ENCODE measurements at regions of chr20 and their contacts with region 1.

Region 1: GRCh38 chr20:42604998-42605956 is 584.4 kb downstream of the PTPRT start:
- DNase-seq: no peak
- ATAC-seq: no peak
- H3K4me3 ChIP-seq: no peak overlapping the region
- H3K27ac ChIP-seq: no peak overlapping the region
- H3K4me1 ChIP-seq: no peaks in the 10 kb centered on the region
- H3K27me3 ChIP-seq: no peaks in the 10 kb centered on the region
- CTCF ChIP-seq: no peak
- POLR2A ChIP-seq: no peak
- RAD21 ChIP-seq: no peak

Region 2: GRCh38 chr20:42587427-42587826 is 17.9 kb before region 1 on chr20:
- CTCF ChIA-PET with region 1: interaction called, 10 read pairs
- POLR2A ChIA-PET with region 1: no interaction called
- dilution Hi-C with region 1: no loop called
- in situ Hi-C with region 1: no loop called
- intact Hi-C with region 1: no loop called
- DNase-seq: no peak
- ATAC-seq: no peak
- H3K4me3 ChIP-seq: no peak overlapping the region
- H3K27ac ChIP-seq: no peak overlapping the region
- H3K4me1 ChIP-seq: no peaks in the 10 kb centered on the region
- H3K27me3 ChIP-seq: no peaks in the 10 kb centered on the region
- CTCF ChIP-seq: no peak
- POLR2A ChIP-seq: no peak
- RAD21 ChIP-seq: no peak

Measured in IMR-90 (cell line).